ENCODE measurements at regions of chr2 and their contacts with region 1.

Region 1: DNA sequence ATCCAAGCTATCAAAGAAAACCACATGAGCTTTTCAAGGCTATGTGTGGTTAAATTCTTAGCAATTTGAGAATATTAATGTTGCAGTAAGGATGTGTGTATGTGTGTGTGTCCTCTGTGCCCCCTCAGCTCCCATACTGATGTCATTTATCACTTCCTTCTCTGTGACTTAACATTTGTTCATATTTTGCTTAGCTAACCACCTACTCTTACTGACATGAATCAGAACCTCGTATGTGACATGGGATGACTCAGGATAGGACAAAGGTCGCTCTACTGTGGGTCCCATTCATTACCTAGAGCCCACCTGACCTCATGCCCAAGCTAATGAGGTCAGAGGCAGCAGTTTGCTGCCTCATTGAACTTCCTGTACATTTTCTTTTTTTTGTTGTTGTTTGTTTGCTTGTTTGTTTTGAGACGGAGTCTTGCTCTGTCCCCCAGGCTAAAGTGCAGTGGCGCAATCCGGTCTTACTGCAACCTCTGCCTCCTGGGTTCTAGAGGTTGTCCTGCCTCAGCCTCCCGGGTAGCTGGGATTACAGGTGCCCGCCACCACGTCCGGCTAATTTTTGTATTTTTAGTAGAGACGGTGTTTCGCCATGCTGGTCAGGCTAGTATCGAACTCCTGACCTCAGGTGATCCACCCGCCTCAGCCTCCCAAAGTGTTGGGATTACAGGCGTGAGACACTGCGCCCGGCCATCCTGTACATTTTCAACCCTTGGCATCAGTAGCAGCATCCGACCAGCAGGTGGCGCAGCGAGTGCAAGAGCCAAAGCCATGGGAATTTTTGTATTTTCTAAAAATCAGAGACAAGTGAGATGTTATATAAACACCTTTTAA is 36.4 kb downstream of the MOGAT1 start:
- DNase-seq: peak; percentile 75
- H3K4me3 ChIP-seq: no peak overlapping the region
- H3K27ac ChIP-seq: peak overlapping the region; percentile 91
- H3K4me1 ChIP-seq: peaks cover 31% of the 10 kb centered on the region
- H3K27me3 ChIP-seq: no peaks in the 10 kb centered on the region
- CTCF ChIP-seq: peak; percentile 79 to 83
- POLR2A ChIP-seq: no peak

Region 2: DNA sequence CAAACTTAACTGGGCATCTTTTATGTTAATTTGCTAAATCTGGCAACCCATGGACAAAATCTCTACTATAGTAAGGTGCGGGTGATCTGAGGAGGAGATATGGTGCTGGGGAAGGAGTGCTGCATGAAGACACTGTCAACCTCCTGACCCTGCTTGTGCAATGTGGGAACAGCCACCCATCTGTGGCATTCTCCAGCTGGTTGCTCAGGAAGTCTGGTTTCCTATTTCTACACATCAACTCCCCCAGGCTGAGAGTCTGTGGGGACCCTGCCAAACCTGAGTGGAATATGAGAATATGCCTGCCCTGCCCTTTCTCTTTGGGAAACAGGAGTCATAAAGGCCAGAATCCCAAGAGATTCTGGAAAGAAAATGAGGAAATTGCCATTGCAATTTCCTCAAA is 349.0 kb before region 1 on chr2:
- CTCF ChIA-PET with region 1: no interaction called
- POLR2A ChIA-PET with region 1: no interaction called
- dilution Hi-C with region 1: no loop called
- intact Hi-C with region 1: no loop called
- DNase-seq: peak; percentile 75
- H3K4me3 ChIP-seq: no peak overlapping the region
- H3K27ac ChIP-seq: no peak overlapping the region
- H3K4me1 ChIP-seq: peaks cover 9% of the 10 kb centered on the region
- H3K27me3 ChIP-seq: peaks cover 0 to 1% of the 10 kb centered on the region in 2 experiments
- CTCF ChIP-seq: no peak
- POLR2A ChIP-seq: no peak

Region 3: DNA sequence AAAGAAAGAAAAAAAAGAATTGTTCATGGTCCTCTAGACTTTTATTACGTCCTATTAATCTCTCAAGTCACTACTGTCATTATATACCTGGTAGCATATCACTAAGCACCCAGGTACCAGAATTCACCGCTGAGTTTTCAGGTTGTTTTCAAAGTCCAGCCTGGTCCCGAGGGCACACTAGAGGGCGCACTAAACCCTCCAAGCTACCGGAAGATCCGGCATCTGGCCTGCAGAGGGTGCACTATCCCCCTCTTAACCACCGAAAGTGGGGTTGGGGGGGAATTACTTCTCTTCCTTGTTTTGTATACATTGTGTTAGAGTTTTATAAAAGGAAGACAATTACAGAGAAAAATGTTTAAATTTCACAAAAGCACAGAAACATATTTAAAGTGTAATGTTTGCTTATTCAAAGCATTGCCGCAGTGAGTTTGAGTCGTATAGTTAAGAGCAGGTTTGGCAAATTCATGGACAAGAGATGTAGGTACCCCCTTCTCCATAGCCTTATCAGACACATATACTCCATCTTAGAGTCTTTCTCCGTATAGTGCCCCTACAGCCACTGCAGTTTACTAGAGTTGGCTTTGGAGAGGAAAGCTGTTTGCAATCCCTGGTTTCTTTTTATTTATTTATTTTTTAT is 17.2 kb before region 1 on chr2:
- CTCF ChIA-PET with region 1: interaction called, 19 read pairs
- POLR2A ChIA-PET with region 1: no interaction called
- dilution Hi-C with region 1: no loop called
- intact Hi-C with region 1: loop called (anchors 1 kb)
- DNase-seq: peak; percentile 62
- H3K4me3 ChIP-seq: no peak overlapping the region
- H3K27ac ChIP-seq: no peak overlapping the region
- H3K4me1 ChIP-seq: peaks cover 21% of the 10 kb centered on the region
- H3K27me3 ChIP-seq: no peaks in the 10 kb centered on the region
- CTCF ChIP-seq: peak; percentile 99 to 100
- POLR2A ChIP-seq: no peak

Region 4: DNA sequence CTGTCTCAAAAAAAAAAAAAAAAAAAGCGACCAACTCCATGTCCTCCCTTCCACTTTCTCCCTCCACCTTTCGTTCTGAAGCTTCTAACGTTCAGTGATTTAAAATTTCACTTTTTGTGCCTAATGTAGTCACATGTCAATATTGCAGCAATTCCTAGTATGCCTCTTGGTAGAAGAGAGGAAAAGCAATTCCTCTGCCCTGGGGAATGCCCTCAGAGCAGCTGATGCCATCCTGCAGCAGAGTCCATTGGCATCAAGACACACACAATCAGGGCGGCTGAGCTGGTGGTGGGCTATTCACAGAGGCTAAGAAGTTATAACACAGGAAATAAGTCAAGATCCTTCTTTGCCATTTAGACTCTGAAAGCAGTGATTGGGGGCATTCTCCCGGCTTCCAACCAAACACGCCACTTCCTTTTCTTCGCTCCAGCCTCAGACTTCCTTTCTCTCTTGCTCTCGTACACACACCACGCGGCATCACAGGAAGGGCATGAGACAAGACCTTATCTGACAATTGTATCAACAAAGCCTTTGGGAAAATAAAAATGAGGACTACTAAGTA is 35.4 kb after region 1 on chr2:
- CTCF ChIA-PET with region 1: interaction called, 4 read pairs
- POLR2A ChIA-PET with region 1: no interaction called
- dilution Hi-C with region 1: no loop called
- intact Hi-C with region 1: loop called (anchors 1 kb)
- DNase-seq: peak; percentile 81
- H3K4me3 ChIP-seq: peak overlapping the region in 1 of 3 experiments; percentile 21
- H3K27ac ChIP-seq: peak overlapping the region; percentile 37
- H3K4me1 ChIP-seq: peaks cover 10% of the 10 kb centered on the region
- H3K27me3 ChIP-seq: no peaks in the 10 kb centered on the region
- CTCF ChIP-seq: no peak
- POLR2A ChIP-seq: no peak

Region 5: GRCh38 chr2:222797261-222797660 is 89.4 kb after region 1 on chr2:
- CTCF ChIA-PET with region 1: interaction called, 29 read pairs
- POLR2A ChIA-PET with region 1: no interaction called
- dilution Hi-C with region 1: no loop called
- intact Hi-C with region 1: loop called (anchors 1 kb)
- DNase-seq: peak; percentile 48
- H3K4me3 ChIP-seq: no peak overlapping the region
- H3K27ac ChIP-seq: no peak overlapping the region
- H3K4me1 ChIP-seq: peaks cover 2% of the 10 kb centered on the region
- H3K27me3 ChIP-seq: peaks cover 0 to 2% of the 10 kb centered on the region in 2 experiments
- CTCF ChIP-seq: peak; percentile 30 to 43
- POLR2A ChIP-seq: no peak

Region 6: GRCh38 chr2:222860740-222861410 is 153.0 kb after region 1 on chr2 and contains the start of gene ACSL3:
- CTCF ChIA-PET with region 1: interaction called, 79 read pairs
- POLR2A ChIA-PET with region 1: interaction called, 3 read pairs
- dilution Hi-C with region 1: no loop called
- intact Hi-C with region 1: loop called (anchors 1 kb)
- DNase-seq: peak; percentile 96
- H3K4me3 ChIP-seq: peak within 1 kb of the TSS; percentile 72 to 94 (median 92)
- H3K27ac ChIP-seq: peak within 1 kb of the TSS; percentile 89
- H3K4me1 ChIP-seq: peaks cover 38% of the 10 kb centered on the region
- H3K27me3 ChIP-seq: no peaks in the 10 kb centered on the region
- CTCF ChIP-seq: peak in 1 of 2 donors; percentile 1
- POLR2A ChIP-seq: peak; percentile 99
- total RNA-seq, gene ACSL3: 139 and 142 TPM in 2 replicates

Region 7: DNA sequence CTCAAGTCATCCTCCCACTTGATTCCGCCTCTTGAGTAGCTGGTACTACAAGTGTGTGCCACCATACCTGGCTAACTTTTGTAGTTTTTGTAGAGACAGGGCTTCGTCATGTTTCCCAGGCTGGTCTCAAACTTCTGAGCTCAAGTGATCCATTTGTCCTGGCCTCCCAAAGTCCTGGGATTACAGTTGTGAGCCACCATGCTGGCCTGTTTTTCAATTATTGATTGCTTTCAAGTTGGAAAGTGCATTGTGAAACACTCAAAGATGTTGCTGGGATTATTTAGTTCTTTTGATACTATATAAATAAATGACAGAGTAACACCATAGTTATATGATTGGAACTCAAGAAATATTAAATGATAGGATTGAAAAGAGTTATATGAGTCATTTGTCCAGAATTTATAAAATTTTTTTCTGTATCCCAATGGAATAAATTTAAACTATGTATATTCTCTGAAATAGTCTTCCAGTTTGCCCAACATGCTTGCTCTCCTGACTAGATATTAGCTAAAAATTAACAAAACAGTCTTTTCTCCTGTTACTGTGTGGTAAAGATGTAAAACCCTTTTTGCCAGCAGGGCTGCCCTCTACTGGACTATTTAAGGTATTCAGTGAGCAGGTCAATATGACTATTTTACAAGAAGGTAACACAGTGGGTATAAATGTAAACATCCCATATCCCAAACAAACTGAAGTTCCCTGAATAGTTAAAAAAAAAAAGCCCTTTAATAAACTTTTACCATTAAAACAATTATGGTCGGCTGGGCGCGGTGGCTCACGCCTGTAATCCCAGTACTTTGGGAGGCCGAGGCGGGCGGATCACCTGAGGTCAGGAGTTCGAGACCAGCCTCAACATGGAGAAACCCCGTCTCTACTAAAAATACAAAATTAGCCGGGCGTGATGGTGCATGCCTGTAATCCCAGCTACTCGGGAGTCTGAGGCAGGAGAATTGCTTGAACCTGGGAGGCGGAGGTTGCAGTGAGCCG is 195.6 kb after region 1 on chr2:
- CTCF ChIA-PET with region 1: interaction called, 195 read pairs
- POLR2A ChIA-PET with region 1: interaction called, 3 read pairs
- dilution Hi-C with region 1: no loop called
- intact Hi-C with region 1: loop called (anchors 1 kb)
- DNase-seq: peak; percentile 71
- H3K4me3 ChIP-seq: no peak overlapping the region
- H3K27ac ChIP-seq: no peak overlapping the region
- H3K4me1 ChIP-seq: peaks cover 6% of the 10 kb centered on the region
- H3K27me3 ChIP-seq: no peaks in the 10 kb centered on the region
- CTCF ChIP-seq: peak; percentile 42 to 44
- POLR2A ChIP-seq: no peak

Region 8: DNA sequence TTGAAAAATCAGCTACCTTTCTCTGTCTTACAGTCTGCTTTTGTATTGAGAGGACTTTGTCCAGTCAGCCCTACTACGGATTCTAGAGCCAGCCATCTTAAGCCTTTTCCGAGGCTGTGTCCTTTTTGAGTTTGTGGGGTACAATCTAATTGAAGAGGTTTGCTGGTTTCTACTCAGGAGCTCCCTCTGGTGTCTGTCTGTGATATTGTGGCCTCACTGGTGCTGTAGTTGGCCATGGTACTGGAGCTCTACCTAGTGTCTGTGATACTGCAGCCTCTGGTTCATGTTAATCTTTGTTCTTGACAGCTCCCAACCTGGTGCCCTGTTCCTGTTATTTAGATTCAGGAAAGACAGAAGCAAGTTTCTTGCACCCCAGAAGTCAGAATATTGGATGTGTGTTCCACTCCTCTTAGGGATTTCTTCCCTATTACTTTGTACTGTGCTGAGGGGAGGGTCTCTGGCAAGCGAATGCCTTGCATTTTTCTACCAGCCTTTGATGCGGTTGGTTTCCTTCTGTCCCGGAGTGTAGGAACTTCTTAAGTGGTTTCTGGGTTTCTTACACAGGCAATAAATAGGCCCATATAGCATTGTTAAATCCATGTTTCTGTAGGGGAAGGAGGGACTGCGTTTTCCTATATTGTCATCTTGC is 231.4 kb after region 1 on chr2:
- CTCF ChIA-PET with region 1: interaction called, 68 read pairs
- POLR2A ChIA-PET with region 1: no interaction called
- dilution Hi-C with region 1: no loop called
- intact Hi-C with region 1: loop called (anchors 1 kb)
- DNase-seq: peak; percentile 75
- H3K4me3 ChIP-seq: no peak overlapping the region
- H3K27ac ChIP-seq: no peak overlapping the region
- H3K4me1 ChIP-seq: no peaks in the 10 kb centered on the region
- H3K27me3 ChIP-seq: no peaks in the 10 kb centered on the region
- CTCF ChIP-seq: peak; percentile 85 to 87
- POLR2A ChIP-seq: no peak